Posterior cingulate gyrus (tissue), 11 donors: ENCODE measurements at regions of chr15 and their contacts with region 1.

Region 1: GRCh38 chr15:79380755-79381497 is 51.2 kb upstream of the MINAR1 start:
- DNase-seq: peak; percentile 62 to 97 (median 87)

Region 2: GRCh38 chr15:79431636-79432344 is 50.9 kb after region 1 on chr15 and contains the start of gene MINAR1:
- intact Hi-C with region 1: loop called (anchors 5 kb)
- DNase-seq: peak in 6 of 10 donors; percentile 15 to 87 (median 54)

Region 3: DNA sequence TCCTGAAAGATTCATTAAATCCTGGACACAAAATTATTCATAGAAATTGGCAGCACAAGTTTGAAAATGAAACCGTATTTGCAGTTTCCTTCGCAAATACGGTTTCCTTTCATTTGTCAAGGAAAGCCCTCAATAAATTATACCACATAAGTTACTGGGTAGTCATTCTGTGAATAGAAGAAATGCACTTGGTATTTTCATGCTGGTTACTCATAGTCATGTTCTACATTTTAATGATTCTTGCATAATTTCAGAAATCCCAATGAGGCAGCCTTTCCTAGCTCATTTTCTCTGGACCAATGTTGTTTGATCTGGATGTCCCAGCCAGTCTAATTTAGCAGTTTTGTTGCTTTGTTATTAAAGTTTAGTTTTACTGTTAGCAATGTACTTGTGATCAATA is 94.4 kb after region 1 on chr15:
- intact Hi-C with region 1: no loop called
- DNase-seq: no peak

Region 4: DNA sequence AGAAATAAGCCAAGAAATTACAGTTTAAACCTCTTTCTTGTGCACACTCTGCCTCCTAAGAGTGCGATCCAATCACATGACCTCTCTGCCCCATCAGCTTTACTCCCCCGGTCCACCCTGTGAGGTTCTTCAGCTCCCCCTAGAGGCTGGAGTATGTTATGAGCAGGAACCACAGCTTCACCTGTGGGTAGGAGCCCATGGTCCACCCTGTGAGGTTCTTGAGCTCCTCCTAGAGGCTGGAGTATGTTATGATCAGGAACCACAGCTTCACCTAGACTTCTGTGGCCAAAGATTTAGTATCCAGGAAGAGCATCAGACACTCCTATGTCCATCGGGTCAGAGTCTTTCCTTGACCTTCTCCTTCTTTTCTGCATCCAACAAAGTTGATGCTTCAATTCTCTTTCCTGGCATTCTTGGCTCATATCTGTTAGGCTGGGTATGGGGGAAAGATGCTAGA is 215.2 kb after region 1 on chr15:
- intact Hi-C with region 1: loop called (anchors 1 kb)
- DNase-seq: peak in 1 of 10 donors; percentile 78

Region 5: DNA sequence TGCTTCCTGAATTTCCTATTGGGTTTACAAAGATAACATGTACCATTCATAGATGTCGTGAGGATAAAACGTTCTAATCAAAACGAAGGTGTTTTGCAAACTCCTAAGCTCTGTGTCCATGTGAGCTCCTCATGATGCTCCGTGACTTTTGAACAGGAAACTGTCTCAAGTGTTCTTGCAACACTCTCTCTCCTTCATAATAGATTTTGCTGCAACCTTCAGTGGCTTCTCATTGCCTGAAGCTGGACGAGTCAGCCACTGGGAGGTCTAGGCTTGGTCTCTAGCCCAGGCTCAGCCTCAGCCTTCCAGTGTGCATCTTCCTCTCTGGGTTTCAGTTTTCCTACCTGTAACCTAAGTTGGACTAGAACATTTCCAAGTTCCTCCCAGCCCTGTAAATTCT is 608.8 kb after region 1 on chr15:
- intact Hi-C with region 1: loop called (anchors 5 kb)
- DNase-seq: no peak